GM12878 (cell line): ENCODE measurements at regions of chr4 and their contacts with region 1.

Region 1: GRCh38 chr4:70365479-70365878 is 4.9 kb downstream of the SMR3A start:
- DNase-seq: no peak
- ATAC-seq: peak; percentile 45
- H3K4me3 ChIP-seq: no peak overlapping the region
- H3K27ac ChIP-seq: no peak overlapping the region
- H3K4me1 ChIP-seq: no peaks in the 10 kb centered on the region
- H3K27me3 ChIP-seq: no peaks in the 10 kb centered on the region
- CTCF ChIP-seq: no peak
- EP300 ChIP-seq: peak in 1 of 2 experiments; percentile 21; a peak in 1 of 4 replicates
- POLR2A ChIP-seq: no peak
- RAD21 ChIP-seq: no peak

Region 2: DNA sequence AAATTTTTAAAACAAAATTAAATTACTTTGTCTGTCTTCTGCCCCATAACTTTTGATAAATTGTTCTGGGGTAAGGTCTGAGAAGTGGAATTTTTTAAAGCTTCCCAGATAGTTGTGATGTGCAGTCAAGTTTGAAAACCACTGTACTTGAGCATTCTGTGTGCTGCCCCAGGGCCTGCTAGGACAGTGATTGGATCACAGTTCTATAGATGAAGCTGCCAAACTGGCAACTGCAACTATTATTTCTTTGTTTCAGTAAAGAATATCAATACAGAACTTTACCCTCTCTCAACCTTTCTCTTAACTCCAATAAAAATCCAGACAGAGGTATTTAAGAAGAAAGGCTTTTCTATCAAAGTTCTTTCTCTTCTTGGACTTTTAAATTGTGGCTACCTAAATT is 32.1 kb after region 1 on chr4 and contains the start of gene OPRPN:
- CTCF ChIA-PET with region 1: interaction called, 12 read pairs
- POLR2A ChIA-PET with region 1: interaction called, 3 read pairs
- RAD21 ChIA-PET with region 1: no interaction called
- SMC1A ChIA-PET with region 1: interaction called, 7 read pairs
- in situ Hi-C with region 1: no loop called
- intact Hi-C with region 1: no loop called
- DNase-seq: no peak
- ATAC-seq: no peak
- H3K4me3 ChIP-seq: no peak within 1 kb of the TSS
- H3K27ac ChIP-seq: no peak within 1 kb of the TSS
- H3K4me1 ChIP-seq: peaks cover 3% of the 10 kb centered on the region
- H3K27me3 ChIP-seq: no peaks in the 10 kb centered on the region
- CTCF ChIP-seq: no peak
- EP300 ChIP-seq: no peak
- POLR2A ChIP-seq: no peak
- RAD21 ChIP-seq: no peak
- polyA plus RNA-seq, gene OPRPN: not detected

Region 3: GRCh38 chr4:70583952-70584834 is 218.7 kb after region 1 on chr4:
- CTCF ChIA-PET with region 1: no interaction called
- POLR2A ChIA-PET with region 1: no interaction called
- RAD21 ChIA-PET with region 1: no interaction called
- SMC1A ChIA-PET with region 1: no interaction called
- in situ Hi-C with region 1: no loop called
- intact Hi-C with region 1: no loop called
- DNase-seq: no peak
- ATAC-seq: no peak
- H3K4me3 ChIP-seq: no peak overlapping the region
- H3K27ac ChIP-seq: no peak overlapping the region
- H3K4me1 ChIP-seq: no peaks in the 10 kb centered on the region
- H3K27me3 ChIP-seq: no peaks in the 10 kb centered on the region; a peak in 1 of 4 replicates
- CTCF ChIP-seq: no peak
- EP300 ChIP-seq: no peak
- POLR2A ChIP-seq: no peak
- RAD21 ChIP-seq: no peak

Region 4: GRCh38 chr4:70613306-70614183 is 248.1 kb after region 1 on chr4:
- CTCF ChIA-PET with region 1: no interaction called
- POLR2A ChIA-PET with region 1: no interaction called
- RAD21 ChIA-PET with region 1: no interaction called
- SMC1A ChIA-PET with region 1: no interaction called
- in situ Hi-C with region 1: no loop called
- intact Hi-C with region 1: no loop called
- DNase-seq: no peak
- ATAC-seq: peak; percentile 58
- H3K4me3 ChIP-seq: no peak overlapping the region
- H3K27ac ChIP-seq: no peak overlapping the region
- H3K4me1 ChIP-seq: no peaks in the 10 kb centered on the region
- H3K27me3 ChIP-seq: peaks cover 0 to 14% of the 10 kb centered on the region in 2 experiments; a peak in 1 of 4 replicates
- CTCF ChIP-seq: no peak
- EP300 ChIP-seq: no peak
- POLR2A ChIP-seq: no peak
- RAD21 ChIP-seq: no peak